ENCODE measurements at regions of chr7 and their contacts with region 1.

Region 1: GRCh38 chr7:29207162-29207801 is 12.7 kb downstream of the CHN2 start:
- DNase-seq: no peak
- ATAC-seq: peak in 3 of 4 experiments; percentile 22 to 69 (median 43)
- H3K4me3 ChIP-seq: no peak overlapping the region
- H3K4me3 Mint-ChIP-seq: no peak overlapping the region
- H3K27ac ChIP-seq: no peak overlapping the region
- H3K27ac Mint-ChIP-seq: no peak overlapping the region
- H3K4me1 ChIP-seq: peaks cover 9 to 12% of the 10 kb centered on the region in 2 experiments
- H3K4me1 Mint-ChIP-seq: peaks cover 10 to 19% (median 15%) of the 10 kb centered on the region in 3 donors
- H3K27me3 ChIP-seq: no peaks in the 10 kb centered on the region
- H3K27me3 Mint-ChIP-seq: no peaks in the 10 kb centered on the region

Region 2: GRCh38 chr7:29228289-29229011 is 21.2 kb after region 1 on chr7:
- CTCF ChIA-PET with region 1: no interaction called
- POLR2A ChIA-PET with region 1: interaction called in 1 of 2 experiments, 14 read pairs
- DNase-seq: no peak
- ATAC-seq: no peak
- H3K4me3 ChIP-seq: no peak overlapping the region
- H3K4me3 Mint-ChIP-seq: no peak overlapping the region
- H3K27ac ChIP-seq: no peak overlapping the region
- H3K27ac Mint-ChIP-seq: no peak overlapping the region
- H3K4me1 ChIP-seq: no peaks in the 10 kb centered on the region
- H3K4me1 Mint-ChIP-seq: no peaks in the 10 kb centered on the region
- H3K27me3 ChIP-seq: no peaks in the 10 kb centered on the region
- H3K27me3 Mint-ChIP-seq: no peaks in the 10 kb centered on the region

Measured in T-cell (primary cell).